Activated CD4-positive, alpha-beta T cell treated with anti-CD3 and anti-CD28 coated beads for 36 hours (primary cell): ENCODE measurements at regions of chr1 and their contacts with region 1.

Region 1: DNA sequence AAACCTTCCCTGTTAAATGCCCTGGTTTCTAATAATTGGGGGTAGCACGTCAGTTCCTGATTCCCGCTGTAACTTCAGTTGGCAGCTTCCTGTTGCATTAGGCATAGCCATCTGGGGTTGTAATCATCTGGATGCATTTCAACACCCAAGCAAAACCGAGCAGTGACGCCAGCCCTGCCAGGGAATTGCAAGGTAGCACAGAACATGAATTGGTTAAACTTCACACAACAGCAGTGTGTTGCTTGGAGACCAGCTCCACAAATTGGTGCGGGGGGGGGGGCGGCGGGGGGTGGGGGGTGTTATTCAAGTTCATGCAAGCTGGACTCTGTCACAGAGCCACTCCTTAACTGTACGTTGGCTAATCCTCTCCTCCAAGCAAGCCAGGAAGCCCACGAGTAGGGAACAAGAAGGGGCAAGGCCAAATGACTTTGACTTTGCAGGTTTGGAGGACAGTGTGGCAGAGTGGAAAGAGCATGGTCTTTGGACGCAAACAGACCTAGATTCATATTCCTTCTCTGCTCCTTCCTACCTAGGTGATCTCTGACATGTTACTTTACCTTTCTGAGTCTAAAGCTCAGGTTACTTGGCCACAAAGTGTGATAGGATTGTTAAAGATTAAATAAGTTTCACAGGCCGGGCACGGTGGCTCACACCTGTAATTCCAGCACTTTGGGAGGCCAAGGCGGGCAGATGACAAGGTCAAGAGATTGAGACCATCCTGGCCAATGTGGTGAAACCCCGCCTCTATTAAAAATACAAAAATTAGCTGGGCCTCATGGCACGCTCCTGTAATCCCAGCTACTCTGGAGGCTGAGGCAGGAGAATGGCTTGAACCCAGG is 4.7 kb downstream of the LAX1 start:
- DNase-seq: no peak
- ATAC-seq: no peak
- H3K4me3 Mint-ChIP-seq: no peak overlapping the region
- H3K27ac Mint-ChIP-seq: peak overlapping the region; percentile 59
- H3K4me1 Mint-ChIP-seq: peaks cover 25% of the 10 kb centered on the region
- H3K27me3 Mint-ChIP-seq: no peaks in the 10 kb centered on the region

Region 2: DNA sequence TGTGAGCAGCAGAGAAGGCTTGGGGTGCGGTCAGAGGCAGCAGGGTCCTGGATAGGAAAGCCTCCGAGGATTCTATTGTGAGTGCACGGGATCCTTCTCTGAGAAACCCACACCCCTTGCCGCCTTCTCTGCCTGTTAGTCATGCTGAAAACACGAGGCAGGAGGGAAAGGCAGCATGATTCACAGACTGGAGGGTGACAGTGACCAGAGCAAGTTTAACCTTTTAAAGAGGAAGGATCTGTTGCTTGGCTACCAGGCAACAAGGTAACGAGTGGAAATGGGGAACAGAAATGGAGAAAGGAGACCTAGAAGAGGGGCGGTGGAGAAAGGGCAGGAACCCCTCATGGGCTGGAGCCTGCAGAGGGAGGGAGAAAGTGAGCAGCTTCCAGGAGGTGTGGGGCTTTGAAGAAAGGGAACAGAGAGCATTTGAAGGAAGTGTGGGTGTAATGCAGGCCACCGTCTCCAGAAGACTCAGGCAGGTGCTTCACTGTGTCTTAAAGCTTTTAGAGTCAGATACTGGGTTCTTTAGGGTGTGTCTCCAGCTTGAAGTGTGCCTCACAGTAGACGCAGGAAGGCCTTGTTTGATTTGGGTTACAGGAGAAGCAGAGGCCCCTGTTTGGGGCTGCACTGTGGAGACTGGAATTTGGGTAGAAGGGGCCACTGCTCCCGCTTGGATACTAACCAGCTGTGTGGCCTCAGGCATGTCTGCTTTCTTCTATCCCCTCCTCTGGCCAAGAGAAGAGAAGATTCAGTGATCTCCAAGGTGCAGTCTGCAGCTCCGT is 256.7 kb before region 1 on chr1:
- CTCF ChIA-PET with region 1: no interaction called
- POLR2A ChIA-PET with region 1: interaction called, 3 read pairs
- intact Hi-C with region 1: loop called (anchors 2 to 5 kb)
- DNase-seq: peak; percentile 81
- ATAC-seq: peak; percentile 88
- H3K4me3 Mint-ChIP-seq: peak overlapping the region; percentile 6
- H3K27ac Mint-ChIP-seq: peak overlapping the region; percentile 83
- H3K4me1 Mint-ChIP-seq: peaks cover 36% of the 10 kb centered on the region
- H3K27me3 Mint-ChIP-seq: no peaks in the 10 kb centered on the region

Region 3: GRCh38 chr1:203649999-203650855 is 119.5 kb before region 1 on chr1:
- CTCF ChIA-PET with region 1: interaction called, 9 read pairs
- POLR2A ChIA-PET with region 1: interaction called, 9 read pairs
- intact Hi-C with region 1: loop called in 1 of 2 experiments (anchors 1 kb)
- DNase-seq: peak; percentile 81
- ATAC-seq: peak; percentile 43
- H3K4me3 Mint-ChIP-seq: peak overlapping the region; percentile 59
- H3K27ac Mint-ChIP-seq: peak overlapping the region; percentile 89
- H3K4me1 Mint-ChIP-seq: peaks cover 74% of the 10 kb centered on the region
- H3K27me3 Mint-ChIP-seq: no peaks in the 10 kb centered on the region

Region 4: DNA sequence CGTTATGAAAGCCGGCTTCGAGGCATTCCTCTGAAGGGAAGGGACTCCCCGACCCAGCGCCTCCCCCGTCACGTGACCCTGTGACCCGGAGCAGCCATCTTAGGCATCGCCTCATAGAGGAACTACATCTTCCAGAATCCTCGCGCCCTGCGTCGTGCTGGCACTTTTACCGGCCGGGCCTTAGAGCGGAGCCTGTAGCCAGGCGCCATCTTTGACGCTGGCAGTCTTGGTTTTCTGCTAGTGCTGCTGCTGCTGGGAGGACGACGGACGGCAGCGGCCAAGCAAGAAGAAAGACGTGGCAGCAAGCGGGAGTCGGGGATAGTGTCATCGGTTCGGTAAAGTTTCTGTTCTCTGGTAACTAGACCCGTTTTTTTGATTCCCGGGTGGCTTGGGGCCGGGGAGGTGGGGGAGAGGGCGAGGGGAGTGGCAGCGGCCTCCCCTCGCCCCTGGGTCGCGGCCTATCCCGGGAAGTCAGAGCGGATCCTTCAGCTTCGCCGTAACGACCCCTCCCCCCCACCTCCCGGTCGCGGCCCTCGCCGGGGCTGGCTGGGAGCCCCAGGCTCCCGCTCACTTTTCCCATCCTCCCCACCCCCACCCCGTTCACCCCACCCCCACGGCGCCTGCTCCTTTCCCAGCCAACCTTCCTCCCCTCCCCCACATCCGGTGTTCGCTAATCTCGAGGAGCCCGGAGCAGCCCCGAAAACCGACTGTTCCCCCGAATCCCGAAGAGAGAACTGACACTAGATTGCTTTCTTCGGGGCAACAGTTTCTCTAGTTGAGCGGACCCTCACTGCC is 25.9 kb after region 1 on chr1 and contains the starts of genes ZBED6 and ZC3H11A:
- CTCF ChIA-PET with region 1: interaction called, 3 read pairs
- POLR2A ChIA-PET with region 1: no interaction called
- intact Hi-C with region 1: loop called (anchors 1 kb)
- DNase-seq: peak; percentile 99
- ATAC-seq: peak; percentile 99
- H3K4me3 Mint-ChIP-seq: peak within 1 kb of the TSS; percentile 86
- H3K27ac Mint-ChIP-seq: peak within 1 kb of the TSS; percentile 96
- H3K4me1 Mint-ChIP-seq: peaks cover 45% of the 10 kb centered on the region
- H3K27me3 Mint-ChIP-seq: no peaks in the 10 kb centered on the region
- total RNA-seq, gene ZBED6: 16.4 to 19.3 TPM
- total RNA-seq, gene ZC3H11A: 92.8 to 112 TPM

Region 5: GRCh38 chr1:204018463-204018862 is 248.7 kb after region 1 on chr1:
- CTCF ChIA-PET with region 1: no interaction called
- POLR2A ChIA-PET with region 1: no interaction called
- intact Hi-C with region 1: no loop called
- DNase-seq: no peak
- ATAC-seq: no peak
- H3K4me3 Mint-ChIP-seq: no peak overlapping the region
- H3K27ac Mint-ChIP-seq: no peak overlapping the region
- H3K4me1 Mint-ChIP-seq: no peaks in the 10 kb centered on the region
- H3K27me3 Mint-ChIP-seq: peaks cover 3% of the 10 kb centered on the region